Activated naive CD4-positive, alpha-beta T cell treated with anti-CD3 and anti-CD28 coated beads for 36 hours (primary cell): ENCODE measurements at regions of chr7 and their contacts with region 1.

Region 1: DNA sequence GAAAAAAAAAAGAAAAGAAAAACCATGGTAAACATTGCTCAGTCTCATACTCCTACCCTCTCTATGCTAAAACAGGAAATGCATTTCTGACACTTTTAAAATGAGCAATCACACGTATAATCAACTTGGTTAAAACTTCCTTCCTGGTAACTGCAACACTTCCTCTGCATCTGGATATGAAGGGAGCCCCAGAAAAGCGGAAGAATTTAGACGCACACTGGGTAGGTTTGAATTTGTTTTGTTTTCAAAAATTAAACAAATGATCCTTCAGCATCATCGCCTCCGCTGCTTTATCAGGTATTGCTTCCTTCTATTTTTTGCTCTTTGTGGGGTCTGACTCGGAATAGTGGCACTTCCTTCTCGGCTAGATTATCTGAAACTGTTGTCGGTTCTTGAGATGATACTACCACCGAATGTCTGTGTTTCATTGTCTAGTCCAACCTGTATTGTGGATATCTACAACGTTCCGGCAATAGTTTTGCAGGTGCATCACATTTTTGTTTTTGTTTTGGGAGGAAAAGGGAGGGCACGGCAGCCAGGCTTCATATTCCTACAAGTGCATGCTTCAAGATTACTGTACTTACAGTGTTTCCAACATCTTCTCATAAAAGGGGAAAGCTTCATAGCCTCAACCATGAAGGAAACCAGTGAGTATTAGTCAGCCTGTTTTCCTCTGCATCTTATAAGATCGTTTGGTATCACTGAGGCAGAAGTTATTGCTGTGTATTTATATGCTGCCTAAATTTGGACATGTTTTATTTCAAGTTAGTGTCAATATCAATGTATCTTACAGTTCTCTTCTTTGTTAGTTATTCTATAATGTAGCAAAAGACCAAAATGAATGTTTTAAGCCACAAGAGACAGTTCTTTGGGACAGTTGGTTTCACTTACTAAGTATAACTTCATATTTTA is at the start of gene PIK3CG:
- DNase-seq: no peak
- H3K4me3 Mint-ChIP-seq: peak within 1 kb of the TSS; percentile 79
- H3K27ac Mint-ChIP-seq: peak within 1 kb of the TSS; percentile 65
- H3K4me1 Mint-ChIP-seq: peaks cover 77% of the 10 kb centered on the region
- H3K27me3 Mint-ChIP-seq: no peaks in the 10 kb centered on the region
- total RNA-seq, gene PIK3CG: 3.6 to 3.8 TPM

Region 2: GRCh38 chr7:105866102-105866801 is 999.1 kb before region 1 on chr7:
- CTCF ChIA-PET with region 1: no interaction called
- intact Hi-C with region 1: loop called (anchors 5 kb)
- DNase-seq: no peak
- H3K4me3 Mint-ChIP-seq: no peak overlapping the region
- H3K27ac Mint-ChIP-seq: no peak overlapping the region
- H3K4me1 Mint-ChIP-seq: no peaks in the 10 kb centered on the region
- H3K27me3 Mint-ChIP-seq: no peaks in the 10 kb centered on the region

Region 3: GRCh38 chr7:106425017-106425719 is 440.2 kb before region 1 on chr7:
- CTCF ChIA-PET with region 1: no interaction called
- intact Hi-C with region 1: loop called (anchors 5 kb)
- DNase-seq: peak; percentile 96
- H3K4me3 Mint-ChIP-seq: peak overlapping the region; percentile 80
- H3K27ac Mint-ChIP-seq: peak overlapping the region; percentile 99
- H3K4me1 Mint-ChIP-seq: peaks cover 86% of the 10 kb centered on the region
- H3K27me3 Mint-ChIP-seq: peaks cover 3% of the 10 kb centered on the region

Region 4: GRCh38 chr7:106717955-106718871 is 147.2 kb before region 1 on chr7:
- CTCF ChIA-PET with region 1: no interaction called
- intact Hi-C with region 1: loop called (anchors 1 kb)
- DNase-seq: peak; percentile 92
- H3K4me3 Mint-ChIP-seq: no peak overlapping the region
- H3K27ac Mint-ChIP-seq: no peak overlapping the region
- H3K4me1 Mint-ChIP-seq: peaks cover 10% of the 10 kb centered on the region
- H3K27me3 Mint-ChIP-seq: no peaks in the 10 kb centered on the region

Region 5: GRCh38 chr7:107044347-107045194 is 179.2 kb after region 1 on chr7 and contains the start of gene PRKAR2B:
- CTCF ChIA-PET with region 1: no interaction called
- intact Hi-C with region 1: loop called (anchors 5 kb)
- DNase-seq: peak; percentile 66
- H3K4me3 Mint-ChIP-seq: peak within 1 kb of the TSS; percentile 82
- H3K27ac Mint-ChIP-seq: no peak within 1 kb of the TSS
- H3K4me1 Mint-ChIP-seq: peaks cover 9% of the 10 kb centered on the region
- H3K27me3 Mint-ChIP-seq: peaks cover 36% of the 10 kb centered on the region
- total RNA-seq, gene PRKAR2B: 1.5 TPM

Region 6: DNA sequence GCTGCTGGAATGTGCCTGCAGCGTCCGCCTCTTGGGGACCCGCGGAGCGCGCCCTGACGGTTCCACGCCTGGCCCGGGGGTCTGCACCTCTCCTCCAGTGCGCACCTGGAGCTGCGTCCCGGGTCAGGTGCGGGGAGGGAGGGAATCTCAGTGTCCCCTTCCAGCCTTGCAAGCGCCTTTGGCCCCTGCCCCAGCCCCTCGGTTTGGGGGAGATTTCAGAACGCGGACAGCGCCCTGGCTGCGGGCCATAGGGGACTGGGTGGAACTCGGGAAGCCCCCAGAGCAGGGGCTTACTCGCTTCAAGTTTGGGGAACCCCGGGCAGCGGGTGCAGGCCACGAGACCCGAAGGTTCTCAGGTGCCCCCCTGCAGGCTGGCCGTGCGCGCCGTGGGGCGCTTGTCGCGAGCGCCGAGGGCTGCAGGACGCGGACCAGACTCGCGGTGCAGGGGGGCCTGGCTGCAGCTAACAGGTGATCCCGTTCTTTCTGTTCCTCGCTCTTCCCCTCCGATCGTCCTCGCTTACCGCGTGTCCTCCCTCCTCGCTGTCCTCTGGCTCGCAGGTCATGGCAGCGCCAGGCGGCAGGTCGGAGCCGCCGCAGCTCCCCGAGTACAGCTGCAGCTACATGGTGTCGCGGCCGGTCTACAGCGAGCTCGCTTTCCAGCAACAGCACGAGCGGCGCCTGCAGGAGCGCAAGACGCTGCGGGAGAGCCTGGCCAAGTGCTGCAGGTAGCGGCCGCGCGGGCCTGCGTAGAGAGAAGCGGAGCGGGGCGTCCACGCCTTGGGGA is 795.9 kb after region 1 on chr7:
- CTCF ChIA-PET with region 1: no interaction called
- intact Hi-C with region 1: loop called (anchors 5 kb)
- DNase-seq: peak; percentile 69
- H3K4me3 Mint-ChIP-seq: peak overlapping the region; percentile 86
- H3K27ac Mint-ChIP-seq: no peak overlapping the region
- H3K4me1 Mint-ChIP-seq: peaks cover 26% of the 10 kb centered on the region
- H3K27me3 Mint-ChIP-seq: peaks cover 31% of the 10 kb centered on the region